Activated CD8-positive, alpha-beta T cell treated with anti-CD3 and anti-CD28 coated beads, Interleukin-2, amount 10 ng/mL, durations not matched to agents 7 days and 5 days (primary cell): ENCODE measurements at regions of chr5 and their contacts with region 1.

Region 1: GRCh38 chr5:95781101-95781583 is 41.4 kb downstream of the GLRX start:
- DNase-seq: peak; percentile 82
- ATAC-seq: peak; percentile 97
- H3K4me3 Mint-ChIP-seq: no peak overlapping the region
- H3K27ac Mint-ChIP-seq: peak overlapping the region; percentile 26
- H3K4me1 Mint-ChIP-seq: peaks cover 38% of the 10 kb centered on the region
- H3K27me3 Mint-ChIP-seq: no peaks in the 10 kb centered on the region

Region 2: DNA sequence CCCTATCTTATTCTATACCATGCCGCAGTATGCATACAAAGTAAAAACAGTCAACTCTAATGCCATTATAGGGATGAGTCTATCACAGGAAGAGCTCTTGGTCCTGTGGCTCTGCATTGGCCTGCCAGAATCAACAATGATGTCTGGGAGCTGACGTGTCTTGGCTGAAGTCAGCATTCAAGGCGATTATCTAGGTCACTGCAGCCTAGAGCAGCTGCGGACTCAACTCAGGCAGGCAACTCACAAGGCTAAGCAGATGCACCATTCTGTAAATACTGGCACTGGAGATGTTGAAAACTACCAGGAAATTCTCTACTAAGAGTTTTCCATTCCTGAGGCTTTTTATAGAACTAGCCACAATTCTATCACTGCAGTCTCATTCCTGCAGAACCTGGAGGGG is 111.6 kb before region 1 on chr5:
- CTCF ChIA-PET with region 1: interaction called, 37 read pairs
- POLR2A ChIA-PET with region 1: no interaction called
- DNase-seq: no peak
- ATAC-seq: no peak
- H3K4me3 Mint-ChIP-seq: no peak overlapping the region
- H3K27ac Mint-ChIP-seq: no peak overlapping the region
- H3K4me1 Mint-ChIP-seq: no peaks in the 10 kb centered on the region
- H3K27me3 Mint-ChIP-seq: peaks cover 11% of the 10 kb centered on the region

Region 3: GRCh38 chr5:95794070-95794516 is 13.0 kb after region 1 on chr5:
- CTCF ChIA-PET with region 1: interaction called, 60 read pairs
- POLR2A ChIA-PET with region 1: no interaction called
- DNase-seq: no peak
- ATAC-seq: no peak
- H3K4me3 Mint-ChIP-seq: no peak overlapping the region
- H3K27ac Mint-ChIP-seq: no peak overlapping the region
- H3K4me1 Mint-ChIP-seq: peaks cover 7% of the 10 kb centered on the region
- H3K27me3 Mint-ChIP-seq: peaks cover 2% of the 10 kb centered on the region

Region 4: DNA sequence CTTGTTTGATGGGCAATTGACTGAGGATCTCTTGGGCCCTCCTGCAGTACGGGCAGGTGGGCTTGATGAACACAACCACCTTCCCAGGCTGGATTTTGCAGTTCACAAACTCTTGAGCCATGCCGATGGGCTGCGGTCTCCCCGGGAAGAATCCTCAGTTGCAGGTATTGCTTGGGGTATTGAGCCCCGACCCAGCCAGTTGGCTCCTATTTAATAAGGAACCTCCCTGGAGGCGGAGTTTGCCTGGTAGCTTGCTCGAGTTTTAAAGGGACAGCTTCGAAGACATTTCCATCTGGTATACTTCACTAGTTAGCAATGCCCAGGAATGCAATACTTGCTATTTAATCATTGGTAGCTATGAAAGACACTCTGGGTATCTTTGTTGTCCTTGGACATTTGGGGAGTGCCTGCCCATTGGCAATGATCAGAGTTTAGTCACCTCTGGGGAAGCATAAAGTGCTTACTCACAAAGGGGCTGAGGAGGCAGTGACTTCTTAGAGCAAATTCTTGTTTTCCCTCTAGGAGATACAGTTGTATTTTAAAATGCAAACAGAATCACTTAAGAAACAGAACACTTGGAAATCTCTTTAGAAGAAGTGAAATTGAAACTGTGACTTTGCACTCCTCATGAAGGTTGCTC is 41.5 kb after region 1 on chr5 and contains the start of gene GLRX:
- CTCF ChIA-PET with region 1: interaction called, 130 read pairs
- POLR2A ChIA-PET with region 1: interaction called, 4 read pairs
- DNase-seq: peak; percentile 77
- ATAC-seq: peak; percentile 54
- H3K4me3 Mint-ChIP-seq: peak within 1 kb of the TSS; percentile 97
- H3K27ac Mint-ChIP-seq: peak within 1 kb of the TSS; percentile 88
- H3K4me1 Mint-ChIP-seq: peaks cover 71% of the 10 kb centered on the region
- H3K27me3 Mint-ChIP-seq: no peaks in the 10 kb centered on the region
- total RNA-seq, gene GLRX: 65.4 to 67.4 TPM

Region 5: GRCh38 chr5:95858661-95859326 is 77.7 kb after region 1 on chr5:
- CTCF ChIA-PET with region 1: interaction called, 536 read pairs
- POLR2A ChIA-PET with region 1: no interaction called
- DNase-seq: peak; percentile 91
- ATAC-seq: peak; percentile 96
- H3K4me3 Mint-ChIP-seq: peak overlapping the region; percentile 36
- H3K27ac Mint-ChIP-seq: peak overlapping the region; percentile 60
- H3K4me1 Mint-ChIP-seq: peaks cover 44% of the 10 kb centered on the region
- H3K27me3 Mint-ChIP-seq: peaks cover 2% of the 10 kb centered on the region